ENCODE measurements at regions of chr7 and their contacts with region 1.

Region 1: DNA sequence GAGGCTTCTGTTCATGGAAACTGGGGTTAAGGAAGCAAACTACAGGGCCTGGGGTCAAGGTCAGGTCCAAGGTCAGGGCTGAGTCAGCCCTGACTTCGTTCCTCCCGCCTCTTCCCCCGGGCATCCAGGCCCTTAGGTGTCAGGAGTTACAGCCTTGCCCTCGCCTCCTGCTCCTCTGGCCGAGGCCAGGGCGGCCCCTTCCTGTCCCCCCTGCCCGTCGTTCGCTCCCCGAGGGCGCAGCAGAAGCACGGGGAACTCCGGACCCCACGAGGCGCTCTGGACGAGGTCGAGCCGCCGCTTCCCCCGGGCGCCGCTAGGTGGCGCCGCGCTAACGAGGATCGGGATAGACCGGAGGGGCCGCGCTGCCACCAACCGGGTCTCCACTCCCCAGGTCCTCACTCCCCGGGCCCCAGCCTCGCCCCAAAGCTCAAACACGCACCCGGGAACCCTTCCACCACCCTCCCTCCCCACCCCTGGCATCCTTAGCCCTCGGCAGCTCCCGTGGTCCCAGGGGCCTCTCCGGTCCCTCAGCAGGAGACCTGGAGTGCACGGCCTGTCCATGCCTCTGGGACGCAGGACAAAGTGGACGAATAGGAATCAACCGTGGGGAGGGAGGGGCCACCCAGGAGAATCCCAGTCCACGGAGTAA is 59.2 kb upstream of the MYL10 start:
- DNase-seq: peak; percentile 58
- H3K4me3 ChIP-seq: peak overlapping the region in 2 of 3 experiments; percentile 8 to 17
- H3K27ac ChIP-seq: no peak overlapping the region
- H3K4me1 ChIP-seq: peaks cover 6% of the 10 kb centered on the region
- H3K27me3 ChIP-seq: no peaks in the 10 kb centered on the region
- CTCF ChIP-seq: peak; percentile 90 to 97
- POLR2A ChIP-seq: no peak

Region 2: GRCh38 chr7:101542527-101543241 is 145.6 kb before region 1 on chr7:
- CTCF ChIA-PET with region 1: interaction called, 4 read pairs
- POLR2A ChIA-PET with region 1: no interaction called
- dilution Hi-C with region 1: no loop called
- intact Hi-C with region 1: loop called (anchors 5 kb)
- DNase-seq: peak; percentile 48
- H3K4me3 ChIP-seq: no peak overlapping the region
- H3K27ac ChIP-seq: no peak overlapping the region
- H3K4me1 ChIP-seq: no peaks in the 10 kb centered on the region
- H3K27me3 ChIP-seq: no peaks in the 10 kb centered on the region
- CTCF ChIP-seq: peak; percentile 58 to 84
- POLR2A ChIP-seq: no peak

Region 3: DNA sequence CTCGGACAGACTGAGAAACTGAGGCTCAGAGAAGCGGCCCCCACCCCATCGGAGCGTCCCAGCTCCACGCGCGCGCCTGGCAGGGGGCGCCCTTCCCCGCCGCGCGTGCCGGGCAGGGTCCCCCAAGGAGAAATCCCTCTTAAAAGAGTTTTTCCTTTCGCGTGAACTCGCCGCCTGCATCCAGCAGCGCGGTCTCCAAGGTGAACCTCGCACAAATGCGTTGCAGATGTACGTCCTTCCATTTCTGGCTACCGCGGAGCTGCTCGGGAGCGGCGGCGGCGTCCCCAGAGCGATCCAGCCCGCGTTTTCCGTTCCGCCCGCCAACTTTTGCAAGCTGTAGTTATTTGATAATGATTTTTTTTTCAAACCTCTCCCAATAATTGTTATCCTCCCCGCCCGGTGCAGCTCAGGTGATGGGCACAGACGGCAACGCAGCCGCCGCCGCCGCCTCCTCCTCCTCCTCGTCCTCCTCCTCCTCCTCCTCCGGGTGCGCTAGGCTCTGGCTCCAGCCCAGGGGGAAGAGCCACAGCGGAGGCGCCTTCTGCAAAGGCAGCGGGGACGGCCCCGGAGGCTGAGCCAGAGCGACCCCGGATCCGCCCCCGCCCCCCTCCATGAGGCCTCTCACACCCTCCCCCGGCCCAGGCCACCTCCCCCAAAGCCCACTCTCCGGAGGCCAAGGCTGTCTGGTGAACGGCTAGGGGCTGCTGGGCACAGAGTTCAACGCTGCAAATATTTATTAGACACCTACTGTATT is 55.1 kb after region 1 on chr7:
- CTCF ChIA-PET with region 1: interaction called, 9 read pairs
- POLR2A ChIA-PET with region 1: no interaction called
- dilution Hi-C with region 1: no loop called
- intact Hi-C with region 1: loop called (anchors 5 kb)
- DNase-seq: peak; percentile 59
- H3K4me3 ChIP-seq: peak overlapping the region in 2 of 3 experiments; percentile 15 to 35
- H3K27ac ChIP-seq: no peak overlapping the region
- H3K4me1 ChIP-seq: no peaks in the 10 kb centered on the region
- H3K27me3 ChIP-seq: peaks cover 2 to 5% of the 10 kb centered on the region in 2 experiments
- CTCF ChIP-seq: peak; percentile 43 to 49
- POLR2A ChIP-seq: no peak

Region 4: GRCh38 chr7:102236592-102237287 is 548.4 kb after region 1 on chr7:
- CTCF ChIA-PET with region 1: interaction called, 9 read pairs
- POLR2A ChIA-PET with region 1: no interaction called
- dilution Hi-C with region 1: no loop called
- intact Hi-C with region 1: loop called (anchors 1 kb)
- DNase-seq: peak; percentile 57
- H3K4me3 ChIP-seq: no peak overlapping the region
- H3K27ac ChIP-seq: no peak overlapping the region
- H3K4me1 ChIP-seq: no peaks in the 10 kb centered on the region
- H3K27me3 ChIP-seq: no peaks in the 10 kb centered on the region
- CTCF ChIP-seq: peak; percentile 69 to 79
- POLR2A ChIP-seq: no peak

Region 5: DNA sequence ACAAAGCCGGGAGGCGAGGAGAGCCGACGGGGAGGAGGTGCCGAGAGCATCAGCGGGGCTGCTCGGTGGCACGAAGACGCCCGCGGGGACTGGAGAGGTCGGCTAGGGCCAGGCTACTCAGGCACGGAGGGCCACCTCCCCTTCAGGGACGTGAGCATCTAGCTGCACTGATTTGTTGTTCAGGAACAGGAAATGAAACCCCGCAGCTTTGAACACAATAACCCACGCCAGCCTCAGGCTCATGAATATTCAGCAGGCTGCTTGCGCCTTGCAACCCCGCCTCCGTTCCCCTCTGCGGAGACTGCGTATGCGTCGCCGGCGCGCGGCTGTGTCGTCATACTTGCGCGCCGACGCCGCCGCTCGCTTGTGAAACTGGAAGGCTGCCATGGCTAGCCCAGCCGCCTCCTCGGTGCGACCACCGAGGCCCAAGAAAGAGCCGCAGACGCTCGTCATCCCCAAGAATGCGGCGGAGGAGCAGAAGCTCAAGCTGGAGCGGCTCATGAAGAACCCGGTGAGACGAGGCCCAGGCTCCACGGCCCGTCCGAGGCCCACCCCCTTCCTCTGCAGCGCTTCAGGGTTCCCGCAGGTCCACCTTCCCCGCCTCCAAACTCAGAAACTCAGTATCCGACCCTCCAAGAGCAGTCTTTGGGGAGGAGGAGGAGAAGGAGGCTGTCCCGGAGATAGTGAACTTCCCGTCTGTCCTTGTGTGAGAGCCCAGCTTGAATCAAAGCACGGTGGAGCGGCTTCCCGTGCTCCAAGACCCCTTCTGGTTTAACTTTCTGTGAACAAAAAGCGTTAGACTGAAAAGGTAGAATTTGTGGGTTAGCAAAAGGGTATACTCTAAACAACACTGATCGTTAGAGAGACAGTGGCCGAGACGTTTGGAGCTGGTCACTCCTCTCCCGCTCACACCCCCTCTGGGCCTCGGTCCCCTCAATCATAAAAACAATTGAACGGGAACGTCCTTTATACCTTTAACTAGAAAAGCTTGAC is 708.0 kb after region 1 on chr7 and contains the start of gene PRKRIP1:
- CTCF ChIA-PET with region 1: no interaction called
- POLR2A ChIA-PET with region 1: no interaction called
- dilution Hi-C with region 1: no loop called
- intact Hi-C with region 1: loop called (anchors 10 kb)
- DNase-seq: peak; percentile 92
- H3K4me3 ChIP-seq: peak within 1 kb of the TSS; percentile 83 to 100 (median 91)
- H3K27ac ChIP-seq: peak within 1 kb of the TSS; percentile 80
- H3K4me1 ChIP-seq: peaks cover 13% of the 10 kb centered on the region
- H3K27me3 ChIP-seq: no peaks in the 10 kb centered on the region
- CTCF ChIP-seq: no peak
- POLR2A ChIP-seq: peak; percentile 83
- total RNA-seq, gene PRKRIP1: 25.7 and 26.1 TPM in 2 replicates

Measured in endothelial cell of umbilical vein (primary cell).